Esophagus squamous epithelium (tissue), 5 donors: ENCODE measurements at regions of chr11 and their contacts with region 1.

Region 1: DNA sequence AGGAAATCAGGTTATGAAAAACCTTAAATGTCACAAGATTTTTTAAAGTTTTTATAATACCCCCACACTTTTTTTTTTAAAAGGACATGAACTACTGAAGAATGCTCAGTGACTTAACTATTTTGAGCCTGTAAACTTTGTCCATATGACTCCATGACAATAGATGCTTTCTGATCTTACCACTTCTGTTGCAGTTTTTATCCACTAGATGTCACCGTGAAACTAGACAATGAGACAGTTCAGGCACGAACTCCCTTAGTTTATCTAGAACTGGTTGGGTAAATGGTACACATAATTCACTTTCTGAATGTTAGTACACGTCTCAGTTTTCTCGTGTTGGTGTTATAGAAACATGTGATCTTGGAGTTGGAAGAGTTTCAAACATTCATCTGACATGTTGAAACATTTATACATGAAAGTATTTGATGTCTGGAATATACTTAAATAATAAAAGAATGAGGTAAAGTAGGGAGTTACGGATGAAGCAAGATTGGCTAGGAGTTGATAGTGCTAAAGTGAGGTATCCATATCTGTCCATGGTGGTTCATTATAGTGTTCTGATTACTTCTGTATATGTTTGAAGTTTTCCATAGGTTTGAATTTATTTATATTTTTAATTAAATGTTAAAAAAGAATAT is 8.1 kb downstream of the CCDC15 start:
- DNase-seq: no peak
- H3K4me3 ChIP-seq: no peak overlapping the region
- H3K27ac ChIP-seq: no peak overlapping the region
- H3K4me1 ChIP-seq: no peaks in the 10 kb centered on the region
- H3K27me3 ChIP-seq: no peaks in the 10 kb centered on the region
- CTCF ChIP-seq: peak; percentile 19 to 83 (median 64)
- POLR2A ChIP-seq: no peak

Region 2: GRCh38 chr11:125141686-125142535 is 179.8 kb after region 1 on chr11:
- intact Hi-C with region 1: loop called (anchors 5 kb)
- DNase-seq: no peak
- H3K4me3 ChIP-seq: no peak overlapping the region
- H3K27ac ChIP-seq: no peak overlapping the region
- H3K4me1 ChIP-seq: peaks cover 0 to 7% (median 6%) of the 10 kb centered on the region in 3 donors
- H3K27me3 ChIP-seq: peaks cover 0 to 51% (median 0%) of the 10 kb centered on the region in 4 donors
- CTCF ChIP-seq: peak; percentile 91 to 98 (median 92)
- POLR2A ChIP-seq: no peak